MCF 10A (cell line): ENCODE measurements at regions of chrX and their contacts with region 1.

Region 1: GRCh38 chrX:110146521-110146920 is 143.6 kb downstream of the TMEM164 start:
- DNase-seq: peak; percentile 79
- H3K4me3 Mint-ChIP-seq: no peak overlapping the region
- H3K27ac Mint-ChIP-seq: no peak overlapping the region
- H3K4me1 Mint-ChIP-seq: peaks cover 11% of the 10 kb centered on the region
- H3K27me3 Mint-ChIP-seq: peaks cover 46% of the 10 kb centered on the region
- CTCF ChIP-seq: peak; percentile 51

Region 2: GRCh38 chrX:109714340-109714958 is 432.1 kb before region 1 on chrX:
- CTCF ChIA-PET with region 1: no interaction called
- POLR2A ChIA-PET with region 1: no interaction called
- intact Hi-C with region 1: loop called (anchors 5 kb)
- DNase-seq: peak; percentile 61
- H3K4me3 Mint-ChIP-seq: no peak overlapping the region
- H3K27ac Mint-ChIP-seq: no peak overlapping the region
- H3K4me1 Mint-ChIP-seq: peaks cover 10% of the 10 kb centered on the region
- H3K27me3 Mint-ChIP-seq: no peaks in the 10 kb centered on the region
- CTCF ChIP-seq: no peak

Region 3: DNA sequence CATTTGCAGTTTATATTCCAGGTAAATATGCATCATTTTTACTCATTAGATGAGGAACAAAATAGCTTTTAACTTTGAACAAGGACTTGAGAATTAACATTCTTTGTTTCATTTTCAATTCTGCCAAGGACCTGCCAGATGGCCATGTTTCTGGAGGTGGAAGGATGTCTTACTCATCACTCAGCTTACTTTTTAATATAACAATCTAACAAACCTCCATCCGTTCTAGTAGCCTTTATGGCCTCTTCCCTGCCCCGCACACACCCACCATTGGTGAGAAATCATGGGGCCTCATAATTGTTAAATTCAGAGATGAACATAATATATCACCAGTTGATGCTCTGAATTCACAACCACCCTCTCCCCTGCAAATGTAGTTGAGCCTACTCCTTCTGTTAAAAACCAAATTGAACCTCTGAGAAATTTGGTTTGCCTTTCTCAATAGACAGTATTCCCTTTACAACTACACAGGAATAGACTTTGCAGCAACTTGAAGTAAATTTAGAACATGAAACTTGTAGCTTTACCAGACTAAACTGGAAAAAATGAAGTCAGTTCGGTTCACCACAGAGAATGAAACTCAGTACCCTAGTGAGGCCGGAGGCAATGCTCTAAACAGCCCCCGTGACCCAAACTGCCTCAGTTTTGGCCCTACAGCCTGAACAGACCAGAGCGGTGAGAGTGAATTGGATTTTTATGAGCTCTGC is 363.4 kb before region 1 on chrX:
- CTCF ChIA-PET with region 1: no interaction called
- POLR2A ChIA-PET with region 1: no interaction called
- intact Hi-C with region 1: no loop called
- DNase-seq: no peak
- H3K4me3 Mint-ChIP-seq: peak overlapping the region; percentile 4
- H3K27ac Mint-ChIP-seq: no peak overlapping the region
- H3K4me1 Mint-ChIP-seq: peaks cover 11% of the 10 kb centered on the region
- H3K27me3 Mint-ChIP-seq: peaks cover 57% of the 10 kb centered on the region
- CTCF ChIP-seq: no peak

Region 4: DNA sequence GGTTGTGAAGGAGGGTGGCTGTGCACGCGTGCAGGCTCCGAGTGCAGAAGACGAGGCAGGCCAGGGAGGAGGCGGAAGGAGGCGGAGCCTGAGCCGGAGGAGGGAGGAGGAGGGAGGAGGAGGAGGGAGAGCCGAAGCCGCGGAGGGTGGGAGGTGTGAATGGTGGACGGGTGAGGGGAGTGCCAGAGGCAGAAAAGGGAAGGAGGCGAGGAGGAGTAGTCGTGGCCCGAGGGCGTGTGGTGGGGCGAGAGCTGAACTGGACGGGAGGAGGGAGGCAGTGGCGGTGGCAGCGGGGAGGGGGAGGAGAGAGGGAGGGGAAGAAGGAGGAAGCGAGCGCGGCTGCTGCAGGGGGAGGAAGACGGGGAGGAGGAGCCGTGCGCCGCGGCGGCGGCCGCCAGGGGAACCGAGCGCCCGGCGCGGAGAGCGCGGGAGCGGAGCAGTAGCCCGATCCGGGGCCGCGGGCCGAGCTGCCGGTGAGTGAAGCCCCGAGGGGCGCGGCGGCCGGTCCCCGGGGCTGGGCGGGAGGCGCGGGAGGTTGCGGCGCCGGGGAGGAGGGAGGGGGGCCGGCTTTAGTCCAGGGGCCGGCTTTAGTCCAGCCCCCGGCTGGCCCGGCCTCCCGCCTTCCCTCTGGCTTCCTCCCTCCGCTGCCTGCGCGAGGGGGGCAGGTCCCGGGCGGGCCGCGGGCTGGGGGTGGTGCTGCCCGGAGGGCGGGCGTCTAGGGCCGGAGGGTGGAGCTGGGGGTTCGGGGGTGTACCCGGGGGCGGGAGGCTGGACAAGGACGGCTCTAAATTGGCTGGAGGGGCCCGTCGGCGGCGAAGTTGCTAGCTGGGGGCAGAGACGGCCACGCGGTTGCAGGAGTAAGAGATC is 144.0 kb before region 1 on chrX and contains the start of gene TMEM164:
- CTCF ChIA-PET with region 1: interaction called, 4 read pairs
- POLR2A ChIA-PET with region 1: interaction called, 5 read pairs
- intact Hi-C with region 1: loop called (anchors 5 kb)
- DNase-seq: peak; percentile 70
- H3K4me3 Mint-ChIP-seq: peak within 1 kb of the TSS; percentile 84
- H3K27ac Mint-ChIP-seq: peak within 1 kb of the TSS; percentile 80
- H3K4me1 Mint-ChIP-seq: peaks cover 27% of the 10 kb centered on the region
- H3K27me3 Mint-ChIP-seq: peaks cover 75% of the 10 kb centered on the region
- CTCF ChIP-seq: no peak
- total RNA-seq, gene TMEM164: 39.2 and 39.4 TPM in 2 replicates

Region 5: DNA sequence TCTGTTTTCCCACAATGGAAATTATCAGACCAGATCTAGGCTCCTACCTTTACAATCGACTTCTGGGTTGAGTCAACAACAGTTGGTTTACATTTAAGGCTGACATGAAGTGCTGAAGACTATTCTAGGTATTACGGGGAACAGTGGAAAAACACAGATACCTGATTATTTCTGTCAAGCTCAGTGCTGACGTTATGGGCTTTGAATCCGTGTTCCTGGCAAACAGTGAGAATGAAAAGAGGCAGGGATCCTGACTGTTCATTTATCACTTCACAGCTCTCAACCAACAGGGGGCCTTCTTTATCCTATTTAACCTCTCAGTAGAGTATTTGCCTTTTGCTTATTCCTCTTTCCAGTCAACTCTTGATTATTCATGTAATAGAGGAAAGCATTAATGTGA is 100.5 kb before region 1 on chrX:
- CTCF ChIA-PET with region 1: interaction called, 5 read pairs
- POLR2A ChIA-PET with region 1: no interaction called
- intact Hi-C with region 1: loop called (anchors 1 kb)
- DNase-seq: no peak
- H3K4me3 Mint-ChIP-seq: no peak overlapping the region
- H3K27ac Mint-ChIP-seq: no peak overlapping the region
- H3K4me1 Mint-ChIP-seq: no peaks in the 10 kb centered on the region
- H3K27me3 Mint-ChIP-seq: peaks cover 75% of the 10 kb centered on the region
- CTCF ChIP-seq: no peak

Region 6: GRCh38 chrX:110412971-110413721 is 266.6 kb after region 1 on chrX:
- CTCF ChIA-PET with region 1: interaction called, 432 read pairs
- POLR2A ChIA-PET with region 1: no interaction called
- intact Hi-C with region 1: no loop called
- DNase-seq: peak; percentile 74
- H3K4me3 Mint-ChIP-seq: no peak overlapping the region
- H3K27ac Mint-ChIP-seq: peak overlapping the region; percentile 68
- H3K4me1 Mint-ChIP-seq: peaks cover 16% of the 10 kb centered on the region
- H3K27me3 Mint-ChIP-seq: peaks cover 64% of the 10 kb centered on the region
- CTCF ChIP-seq: peak; percentile 86